HCT116 (cell line): ENCODE measurements at regions of chr12 and their contacts with region 1.

Region 1: DNA sequence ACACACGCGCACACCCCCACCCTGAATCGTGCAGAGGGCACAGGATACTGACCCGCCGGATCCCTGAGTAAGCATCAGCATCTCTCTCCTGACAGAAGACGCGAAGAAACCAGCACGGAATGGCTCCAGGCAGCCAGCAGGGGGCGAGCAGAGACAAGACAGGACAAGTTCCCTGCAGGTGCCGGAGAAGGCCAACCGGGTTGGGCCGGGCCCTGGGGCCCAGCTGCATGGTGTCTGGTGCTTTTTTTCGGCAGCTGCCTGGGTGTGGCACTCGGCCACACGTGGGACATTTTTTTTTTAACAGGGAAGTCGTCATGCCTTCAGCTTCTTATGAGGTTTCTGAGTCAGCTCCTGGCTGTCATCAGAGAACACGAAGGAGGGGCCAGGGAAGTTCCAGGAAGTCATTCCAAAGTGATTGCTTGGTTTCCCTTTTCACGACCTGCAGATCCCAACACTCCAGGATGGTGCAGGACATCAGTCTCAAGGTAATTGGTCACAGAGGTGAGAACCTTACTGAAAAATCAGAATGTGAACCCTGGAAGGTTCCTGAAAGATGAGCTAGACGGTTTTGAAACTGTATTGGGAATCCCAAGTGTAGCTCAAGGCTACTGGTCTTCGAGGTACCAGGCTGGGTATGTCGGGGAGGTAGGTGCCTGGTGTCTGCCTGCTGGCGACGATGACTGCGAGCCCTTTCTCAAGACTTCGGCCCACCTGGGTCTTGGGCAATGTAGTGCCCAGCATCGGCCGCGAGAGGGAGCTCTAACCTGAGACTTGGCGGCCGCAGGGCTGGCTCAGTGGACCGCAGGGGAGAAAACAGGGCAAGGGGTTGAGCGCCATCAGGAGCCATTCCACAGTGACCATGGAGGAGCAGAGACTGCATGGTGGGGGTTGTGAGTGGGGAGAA is 190.8 kb upstream of the PRMT8 start:
- DNase-seq: peak; percentile 92
- ATAC-seq: peak; percentile 75
- H3K4me3 ChIP-seq: peak overlapping the region; percentile 28 to 40
- H3K27ac ChIP-seq: peak overlapping the region; percentile 83
- H3K4me1 ChIP-seq: peaks cover 24 to 39% of the 10 kb centered on the region in 2 experiments
- H3K27me3 ChIP-seq: no peaks in the 10 kb centered on the region
- CTCF ChIP-seq: peak; percentile 78 to 97 (median 95)
- POLR2A ChIP-seq: no peak
- RAD21 ChIP-seq: peak; percentile 93

Region 2: GRCh38 chr12:3289702-3290101 is 10.5 kb before region 1 on chr12:
- CTCF ChIA-PET with region 1: interaction called, 15 read pairs
- POLR2A ChIA-PET with region 1: no interaction called
- RAD21 ChIA-PET with region 1: no interaction called
- intact Hi-C with region 1: no loop called
- DNase-seq: no peak
- ATAC-seq: no peak
- H3K4me3 ChIP-seq: no peak overlapping the region
- H3K27ac ChIP-seq: no peak overlapping the region
- H3K4me1 ChIP-seq: no peaks in the 10 kb centered on the region
- H3K27me3 ChIP-seq: no peaks in the 10 kb centered on the region
- CTCF ChIP-seq: no peak
- POLR2A ChIP-seq: no peak
- RAD21 ChIP-seq: no peak

Region 3: GRCh38 chr12:3365463-3366411 is 65.6 kb after region 1 on chr12:
- CTCF ChIA-PET with region 1: interaction called, 4 read pairs
- POLR2A ChIA-PET with region 1: no interaction called
- RAD21 ChIA-PET with region 1: no interaction called
- intact Hi-C with region 1: loop called (anchors 2 kb)
- DNase-seq: no peak
- ATAC-seq: peak; percentile 95
- H3K4me3 ChIP-seq: peak overlapping the region; percentile 47 to 60
- H3K27ac ChIP-seq: no peak overlapping the region
- H3K4me1 ChIP-seq: peaks cover 0 to 3% of the 10 kb centered on the region in 2 experiments; a peak in 1 of 4 replicates
- H3K27me3 ChIP-seq: no peaks in the 10 kb centered on the region
- CTCF ChIP-seq: no peak
- POLR2A ChIP-seq: no peak
- RAD21 ChIP-seq: no peak

Region 4: GRCh38 chr12:3527181-3527580 is 227.0 kb after region 1 on chr12:
- CTCF ChIA-PET with region 1: interaction called, 37 read pairs
- POLR2A ChIA-PET with region 1: no interaction called
- RAD21 ChIA-PET with region 1: interaction called in 1 of 2 experiments, 4 read pairs
- intact Hi-C with region 1: loop called (anchors 10 kb)
- DNase-seq: peak; percentile 47
- ATAC-seq: no peak
- H3K4me3 ChIP-seq: no peak overlapping the region
- H3K27ac ChIP-seq: no peak overlapping the region
- H3K4me1 ChIP-seq: no peaks in the 10 kb centered on the region
- H3K27me3 ChIP-seq: no peaks in the 10 kb centered on the region
- CTCF ChIP-seq: no peak
- POLR2A ChIP-seq: no peak
- RAD21 ChIP-seq: no peak

Region 5: DNA sequence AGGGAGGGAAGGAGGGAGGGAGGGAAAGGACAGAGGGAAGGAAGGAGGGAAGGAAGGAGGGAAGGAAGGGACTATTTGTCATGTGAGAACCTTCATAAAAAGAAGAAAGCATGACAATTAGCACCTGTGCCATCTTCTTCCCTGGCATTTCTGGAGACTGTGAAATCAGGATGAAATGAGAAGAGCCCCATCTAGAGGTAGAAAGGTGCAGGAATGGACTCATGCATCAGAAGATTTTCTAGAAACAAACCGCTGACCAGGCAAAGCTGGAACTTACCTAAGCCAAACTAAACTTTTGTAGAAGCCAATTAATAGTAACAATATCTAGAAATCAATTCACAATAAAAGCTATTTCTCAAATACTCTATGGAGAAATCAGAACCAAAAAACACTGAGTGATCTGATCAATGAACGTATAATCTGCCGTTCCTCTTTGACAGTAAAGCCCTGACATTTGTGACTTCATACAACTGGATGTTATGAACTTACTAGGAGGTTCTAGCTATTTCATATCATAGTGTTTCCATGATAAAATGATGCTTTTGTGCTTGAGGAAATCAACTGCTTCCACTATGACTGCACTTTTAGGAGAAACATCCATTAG is 477.1 kb after region 1 on chr12:
- CTCF ChIA-PET with region 1: interaction called, 33 read pairs
- POLR2A ChIA-PET with region 1: no interaction called
- RAD21 ChIA-PET with region 1: interaction called in 1 of 2 experiments, 6 read pairs
- intact Hi-C with region 1: loop called (anchors 1 kb)
- DNase-seq: peak; percentile 33
- ATAC-seq: peak; percentile 90
- H3K4me3 ChIP-seq: no peak overlapping the region
- H3K27ac ChIP-seq: no peak overlapping the region
- H3K4me1 ChIP-seq: no peaks in the 10 kb centered on the region
- H3K27me3 ChIP-seq: peaks cover 31% of the 10 kb centered on the region
- CTCF ChIP-seq: peak; percentile 71 to 74 (median 71)
- POLR2A ChIP-seq: no peak
- RAD21 ChIP-seq: peak; percentile 82